ENCODE measurements at regions of chr4 and their contacts with region 1.

Region 1: DNA sequence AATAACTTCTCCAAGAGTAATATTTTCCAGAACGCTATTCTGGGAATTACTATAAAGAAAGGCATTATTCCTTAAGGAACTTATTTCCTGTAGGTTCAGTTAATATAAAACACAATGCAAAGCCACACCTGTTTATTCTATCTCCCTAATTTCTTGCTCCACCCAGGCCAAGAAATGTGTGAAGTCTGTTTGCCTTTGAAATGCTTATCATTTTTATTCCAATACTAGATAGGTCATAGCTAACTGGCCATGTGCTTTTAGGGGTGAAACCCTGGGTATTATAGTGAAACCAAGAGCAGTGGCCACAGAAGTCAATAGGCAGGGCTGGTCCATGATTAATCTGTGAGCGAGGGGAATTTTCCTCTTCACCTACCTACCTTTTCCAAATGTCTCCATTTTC is 14.8 kb downstream of the CXCL3 start:
- DNase-seq: peak; percentile 54
- H3K4me3 Mint-ChIP-seq: no peak overlapping the region
- H3K27ac Mint-ChIP-seq: peak overlapping the region; percentile 92
- H3K4me1 Mint-ChIP-seq: peaks cover 22% of the 10 kb centered on the region
- H3K27me3 Mint-ChIP-seq: no peaks in the 10 kb centered on the region
- CTCF ChIP-seq: no peak

Region 2: GRCh38 chr4:73998040-73999011 is 25.4 kb before region 1 on chr4 and contains the start of gene CXCL5:
- CTCF ChIA-PET with region 1: interaction called, 11 read pairs
- intact Hi-C with region 1: no loop called
- DNase-seq: peak; percentile 91
- H3K4me3 Mint-ChIP-seq: peak within 1 kb of the TSS; percentile 91
- H3K27ac Mint-ChIP-seq: peak within 1 kb of the TSS; percentile 96
- H3K4me1 Mint-ChIP-seq: peaks cover 31% of the 10 kb centered on the region
- H3K27me3 Mint-ChIP-seq: no peaks in the 10 kb centered on the region
- CTCF ChIP-seq: no peak
- total RNA-seq, gene CXCL5: 1,110 and 1,906 TPM in 2 replicates

Region 3: GRCh38 chr4:74005528-74005927 is 18.2 kb before region 1 on chr4:
- CTCF ChIA-PET with region 1: no interaction called
- intact Hi-C with region 1: loop called (anchors 1 kb)
- DNase-seq: peak; percentile 18
- H3K4me3 Mint-ChIP-seq: peak overlapping the region; percentile 25
- H3K27ac Mint-ChIP-seq: peak overlapping the region; percentile 86
- H3K4me1 Mint-ChIP-seq: peaks cover 9% of the 10 kb centered on the region
- H3K27me3 Mint-ChIP-seq: no peaks in the 10 kb centered on the region
- CTCF ChIP-seq: no peak

Region 4: GRCh38 chr4:74038161-74039064 is 14.7 kb after region 1 on chr4 and contains the start of gene CXCL3:
- CTCF ChIA-PET with region 1: no interaction called
- intact Hi-C with region 1: loop called (anchors 2 kb)
- DNase-seq: peak; percentile 94
- H3K4me3 Mint-ChIP-seq: peak within 1 kb of the TSS; percentile 84
- H3K27ac Mint-ChIP-seq: peak within 1 kb of the TSS; percentile 91
- H3K4me1 Mint-ChIP-seq: peaks cover 42% of the 10 kb centered on the region
- H3K27me3 Mint-ChIP-seq: no peaks in the 10 kb centered on the region
- CTCF ChIP-seq: no peak
- total RNA-seq, gene CXCL3: 80.8 and 153 TPM in 2 replicates

Region 5: GRCh38 chr4:74056858-74057562 is 33.3 kb after region 1 on chr4:
- CTCF ChIA-PET with region 1: no interaction called
- intact Hi-C with region 1: loop called (anchors 1 kb)
- DNase-seq: no peak
- H3K4me3 Mint-ChIP-seq: no peak overlapping the region
- H3K27ac Mint-ChIP-seq: peak overlapping the region; percentile 91
- H3K4me1 Mint-ChIP-seq: peaks cover 7% of the 10 kb centered on the region
- H3K27me3 Mint-ChIP-seq: no peaks in the 10 kb centered on the region
- CTCF ChIP-seq: no peak

Measured in Calu3 (cell line).